Cardiac septum (tissue), 1 donor: ENCODE measurements at regions of chr21 and their contacts with region 1.

Region 1: GRCh38 chr21:42117229-42117966 is 46.3 kb downstream of the UMODL1 start:
- DNase-seq: no peak

Region 2: GRCh38 chr21:41612674-41613532 is 504.5 kb before region 1 on chr21:
- intact Hi-C with region 1: loop called (anchors 5 kb)
- DNase-seq: peak; percentile 80

Region 3: DNA sequence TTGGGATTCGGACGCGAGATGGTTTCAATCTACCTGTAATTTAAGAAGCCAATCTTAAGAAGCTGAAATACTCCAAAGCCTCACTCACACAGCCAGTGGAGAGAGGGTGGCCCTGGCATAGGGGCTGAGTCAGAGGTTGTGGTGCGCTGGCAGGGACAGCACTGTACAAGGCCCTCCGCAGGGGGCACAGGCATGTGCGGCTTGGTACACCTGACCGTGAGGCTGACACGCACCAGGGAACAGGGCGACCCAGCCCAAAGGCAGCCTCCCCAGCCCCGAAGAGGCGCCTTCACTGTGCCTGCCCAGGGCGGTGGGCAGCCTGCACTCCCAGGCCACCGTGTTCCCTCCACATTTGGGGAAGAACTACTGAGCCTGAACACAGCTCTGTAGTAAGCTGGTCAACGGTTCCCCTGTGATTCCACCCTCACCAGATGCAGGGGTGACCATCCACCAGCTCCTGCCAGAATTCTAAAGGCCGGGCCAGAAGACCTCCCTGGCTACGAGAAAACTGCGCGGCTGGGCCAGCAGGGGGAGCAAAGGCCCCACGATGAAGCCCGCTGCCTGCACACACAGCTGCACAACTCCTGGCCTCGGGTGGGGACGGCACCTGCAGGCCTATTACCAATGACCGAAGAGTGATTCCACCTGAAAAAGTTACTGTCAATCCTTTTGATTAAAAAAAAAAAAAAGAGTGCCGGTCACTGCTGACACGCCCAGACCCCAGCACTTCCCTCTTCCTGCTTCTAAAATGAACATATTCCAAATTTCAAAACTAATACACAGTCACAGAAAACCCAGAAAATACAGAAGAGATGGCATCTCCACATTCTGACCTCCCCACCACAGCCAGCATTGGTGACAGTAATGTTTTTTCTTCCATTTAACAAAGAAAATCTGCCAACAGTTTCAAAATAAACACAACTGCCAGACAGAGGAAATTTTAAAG is 300.9 kb before region 1 on chr21:
- intact Hi-C with region 1: loop called (anchors 2 kb)
- DNase-seq: peak; percentile 77

Region 4: DNA sequence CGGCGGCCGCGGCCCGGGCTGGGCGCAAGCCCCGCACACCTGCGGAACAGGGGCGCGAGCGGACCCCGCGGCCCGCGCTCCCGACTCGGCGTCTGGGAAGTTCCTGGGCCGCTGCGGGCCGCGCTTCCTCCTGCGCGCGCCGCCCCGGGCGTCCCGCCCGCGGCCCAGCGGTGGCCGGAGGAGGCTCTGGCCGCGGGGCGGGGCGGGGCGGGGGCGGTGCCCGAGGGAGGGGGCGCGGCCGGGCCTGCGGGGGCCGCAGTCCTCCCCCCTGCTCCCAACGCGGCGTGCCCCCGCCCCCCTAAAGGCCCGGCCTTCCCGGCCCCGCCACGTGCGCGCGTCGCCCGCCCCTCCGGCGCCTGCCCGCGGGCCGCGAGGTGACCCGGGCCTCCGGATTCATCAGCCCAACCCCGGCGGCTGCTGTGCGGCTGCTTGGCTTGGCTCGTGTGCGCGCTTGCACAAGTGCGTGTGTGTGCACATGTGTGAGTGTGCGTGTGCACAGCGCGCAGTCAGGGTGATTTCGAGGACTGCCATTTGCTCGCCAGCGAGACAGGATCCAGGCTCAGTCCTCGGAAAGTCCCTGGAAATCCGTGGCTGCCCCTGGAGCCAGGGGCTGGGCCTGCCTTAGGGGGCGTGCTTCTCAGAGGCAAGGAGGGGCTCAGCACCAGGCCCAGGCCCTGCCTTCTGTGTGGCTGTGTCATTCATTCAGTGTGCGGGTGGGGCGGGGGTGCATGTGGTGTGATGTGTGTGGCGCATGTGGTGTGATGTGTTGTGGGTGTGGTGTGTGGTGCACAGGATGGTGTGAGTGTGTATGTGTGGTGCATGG is 163.4 kb before region 1 on chr21 and contains the start of gene C2CD2:
- intact Hi-C with region 1: loop called (anchors 10 kb)
- DNase-seq: peak; percentile 80
- total RNA-seq, gene C2CD2: 7.7 TPM

Region 5: DNA sequence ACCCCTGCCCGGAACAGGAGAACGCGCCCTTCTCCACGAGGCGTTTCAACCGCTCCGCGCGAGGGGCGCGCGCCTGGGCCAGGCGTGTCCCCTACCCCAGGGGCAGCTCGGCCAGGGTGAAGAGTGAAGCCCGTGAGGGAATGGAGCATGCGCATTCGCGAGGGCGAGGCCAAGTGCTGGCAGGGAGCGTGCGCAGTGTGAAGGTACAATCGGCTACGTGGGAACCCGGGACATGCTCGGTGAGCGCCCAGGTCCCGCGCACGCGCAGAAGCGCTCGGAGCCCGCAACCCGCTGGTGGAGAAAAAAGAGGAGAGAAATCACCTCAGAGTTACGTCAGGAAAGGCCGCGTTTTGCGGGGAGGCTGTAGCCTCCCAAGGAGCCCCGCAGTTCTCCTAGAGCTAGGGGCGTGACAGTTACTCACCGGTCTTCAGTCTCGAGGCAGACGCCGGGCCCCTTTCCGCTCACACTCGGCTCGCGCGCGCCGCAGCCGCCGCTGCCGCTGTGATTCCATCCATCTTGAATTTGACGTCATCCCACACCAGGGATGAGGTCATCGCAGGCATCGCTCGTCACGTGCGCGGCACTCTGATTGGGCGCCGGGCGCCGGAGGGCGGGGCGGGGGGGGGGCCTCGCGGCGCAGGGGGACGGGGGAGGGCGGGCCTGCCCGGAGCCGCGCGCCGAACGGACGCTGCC is 107.4 kb before region 1 on chr21 and contains the start of gene ZBTB21:
- intact Hi-C with region 1: loop called (anchors 5 kb)
- DNase-seq: peak; percentile 99
- total RNA-seq, gene ZBTB21: 7.8 TPM

Region 6: DNA sequence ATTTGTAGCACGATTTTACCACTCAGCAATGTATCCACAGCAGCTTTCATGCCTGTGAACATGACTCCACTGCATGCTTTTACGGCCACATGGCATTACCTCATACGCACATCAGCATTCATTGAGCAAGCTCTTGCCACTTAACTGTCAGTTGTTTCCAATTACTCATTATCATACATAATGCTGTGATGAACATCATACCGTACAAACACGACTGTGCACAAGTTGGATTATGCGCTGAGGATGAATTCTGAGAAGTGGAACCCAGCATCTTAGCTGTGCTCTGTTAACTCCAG is 36.7 kb before region 1 on chr21:
- intact Hi-C with region 1: no loop called
- DNase-seq: no peak

Region 7: GRCh38 chr21:42227909-42228708 is 110.7 kb after region 1 on chr21:
- intact Hi-C with region 1: no loop called
- DNase-seq: peak; percentile 94

Region 8: DNA sequence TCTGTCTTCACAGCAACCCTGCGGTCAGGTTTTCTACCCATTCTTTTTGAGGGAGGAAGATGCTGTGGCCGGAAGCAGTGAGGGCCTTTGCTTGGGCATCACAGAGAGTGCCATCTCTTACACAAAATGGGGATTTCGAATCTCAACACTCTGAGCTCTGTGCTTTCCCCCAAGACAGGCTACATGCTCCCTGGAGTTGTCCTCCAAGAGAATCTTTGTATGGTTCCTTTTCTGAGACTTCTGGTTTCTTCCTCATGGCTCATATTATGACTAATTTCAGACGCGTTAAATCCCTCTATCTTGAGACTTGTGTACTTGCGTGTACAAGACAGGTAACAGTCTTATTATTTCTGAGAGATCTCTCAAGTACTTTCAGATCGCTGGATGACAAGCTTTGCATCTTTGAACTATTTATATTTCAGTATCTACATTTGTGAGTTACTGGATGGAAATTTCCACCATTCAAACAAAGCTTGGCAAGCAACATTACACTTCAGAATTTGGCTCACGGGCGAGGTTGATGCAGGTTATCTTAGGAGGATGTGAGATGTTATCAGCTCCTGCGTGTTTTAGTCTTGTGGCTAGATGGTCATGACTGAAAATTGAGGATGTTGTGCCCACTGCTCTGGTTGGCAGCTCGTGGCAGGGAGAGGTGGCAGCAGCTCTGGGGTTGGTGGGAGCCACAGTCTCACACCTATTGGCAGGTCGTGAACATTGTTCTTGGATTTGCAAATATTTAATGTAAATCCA is 121.0 kb after region 1 on chr21:
- intact Hi-C with region 1: no loop called
- DNase-seq: no peak

Region 9: GRCh38 chr21:42892931-42893755 is 775.7 kb after region 1 on chr21 and contains the start of gene NDUFV3:
- intact Hi-C with region 1: no loop called
- DNase-seq: peak; percentile 100
- total RNA-seq, gene NDUFV3: 46.7 TPM